ENCODE measurements at regions of chr19 and their contacts with region 1.

Region 1: GRCh38 chr19:58519355-58520256 is at the start of gene ZBTB45:
- DNase-seq: peak; percentile 93 to 94 (median 93)
- ATAC-seq: peak; percentile 90 to 95 (median 94)
- H3K4me3 ChIP-seq: peak within 1 kb of the TSS; percentile 70 to 97 (median 86)
- H3K27ac ChIP-seq: peak within 1 kb of the TSS; percentile 79 to 99 (median 94)
- H3K4me1 ChIP-seq: peaks cover 7 to 53% (median 32%) of the 10 kb centered on the region in 12 donors
- H3K27me3 ChIP-seq: no peaks in the 10 kb centered on the region
- CTCF ChIP-seq: peak; percentile 36 to 78 (median 56)
- POLR2A ChIP-seq: peak in 1 of 2 donors; percentile 42
- total RNA-seq, gene ZBTB45: 9.0 to 13.4 (median 10.5) TPM

Region 2: GRCh38 chr19:58182989-58183816 is 336.4 kb before region 1 on chr19 and contains the start of gene ZNF274:
- intact Hi-C with region 1: loop called in 1 of 10 experiments (anchors 2 kb)
- DNase-seq: peak; percentile 95 to 97 (median 96)
- ATAC-seq: peak; percentile 94 to 96 (median 96)
- H3K4me3 ChIP-seq: peak within 1 kb of the TSS; percentile 73 to 100 (median 94)
- H3K27ac ChIP-seq: peak within 1 kb of the TSS; percentile 90 to 100 (median 99)
- H3K4me1 ChIP-seq: peaks cover 0 to 18% (median 5%) of the 10 kb centered on the region in 12 donors
- H3K27me3 ChIP-seq: no peaks in the 10 kb centered on the region
- CTCF ChIP-seq: no peak
- POLR2A ChIP-seq: peak; percentile 48 to 92
- total RNA-seq, gene ZNF274: 16.2 to 29.0 (median 21.8) TPM

Region 3: GRCh38 chr19:58278157-58279041 is 241.2 kb before region 1 on chr19 and contains the start of gene ZNF8:
- intact Hi-C with region 1: no loop called
- DNase-seq: peak; percentile 98
- ATAC-seq: peak; percentile 95 to 96 (median 95)
- H3K4me3 ChIP-seq: peak within 1 kb of the TSS; percentile 75 to 97 (median 83)
- H3K27ac ChIP-seq: peak within 1 kb of the TSS; percentile 91 to 98 (median 94)
- H3K4me1 ChIP-seq: peaks cover 0 to 28% (median 16%) of the 10 kb centered on the region in 12 donors
- H3K27me3 ChIP-seq: no peaks in the 10 kb centered on the region
- CTCF ChIP-seq: peak in 5 of 12 donors; percentile 14 to 40 (median 27)
- POLR2A ChIP-seq: peak in 1 of 2 donors; percentile 72
- total RNA-seq, gene ZNF8: 4.0 to 7.8 (median 5.5) TPM

Region 4: DNA sequence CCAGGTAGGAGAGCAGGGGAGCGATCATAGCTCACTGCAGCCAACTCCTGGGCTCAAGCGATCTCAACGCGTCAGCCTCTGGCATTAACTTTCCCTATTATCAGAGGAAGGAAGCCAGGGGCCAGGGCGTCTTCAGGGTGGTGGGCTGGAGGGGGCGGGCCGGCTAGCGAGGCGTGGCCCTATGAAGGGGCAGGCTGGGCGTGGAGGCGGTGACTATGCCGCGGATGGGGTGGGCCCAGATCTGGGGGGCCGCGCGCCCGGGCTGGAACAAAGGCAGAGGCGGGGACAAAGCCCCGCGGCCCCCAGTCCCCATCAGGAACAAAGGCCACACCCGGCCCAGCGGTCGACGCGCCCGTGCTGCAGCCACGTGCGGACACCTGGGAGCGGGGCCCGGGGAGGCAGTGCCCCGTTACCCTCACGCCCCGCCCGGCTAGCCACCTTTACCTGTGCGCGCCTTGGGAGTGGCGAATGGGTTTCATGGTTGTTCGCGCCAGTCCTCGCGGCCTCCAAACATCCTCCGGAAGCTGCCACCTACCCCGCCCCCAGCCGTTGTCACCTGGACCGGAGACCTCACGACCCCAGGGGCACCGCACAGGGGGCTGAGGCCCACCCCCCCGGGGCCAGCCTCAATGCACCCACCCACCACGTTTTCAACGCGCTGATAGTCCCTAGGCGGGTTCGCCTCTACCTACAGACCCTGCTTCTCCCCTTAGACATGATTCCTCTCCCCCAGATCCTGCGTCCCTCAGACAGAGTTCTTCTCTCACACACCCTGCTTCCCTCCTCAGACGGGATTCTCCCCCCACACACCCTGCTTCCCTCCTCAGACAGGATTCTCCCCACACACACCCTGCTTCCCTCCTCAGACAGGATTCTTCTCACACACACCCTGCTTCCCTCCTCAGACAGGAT is 18.9 kb after region 1 on chr19:
- intact Hi-C with region 1: loop called in 2 of 10 experiments (anchors 2 kb)
- DNase-seq: peak in 1 of 5 donors; percentile 63
- ATAC-seq: peak in 3 of 4 donors; percentile 71 to 97 (median 88)
- H3K4me3 ChIP-seq: peak overlapping the region in 11 of 12 donors; percentile 13 to 54 (median 35)
- H3K27ac ChIP-seq: peak overlapping the region in 7 of 12 donors; percentile 18 to 54 (median 34)
- H3K4me1 ChIP-seq: peaks cover 0 to 17% (median 11%) of the 10 kb centered on the region in 12 donors
- H3K27me3 ChIP-seq: peaks cover 0 to 17% (median 11%) of the 10 kb centered on the region in 9 donors
- CTCF ChIP-seq: no peak
- POLR2A ChIP-seq: no peak

Region 5: DNA sequence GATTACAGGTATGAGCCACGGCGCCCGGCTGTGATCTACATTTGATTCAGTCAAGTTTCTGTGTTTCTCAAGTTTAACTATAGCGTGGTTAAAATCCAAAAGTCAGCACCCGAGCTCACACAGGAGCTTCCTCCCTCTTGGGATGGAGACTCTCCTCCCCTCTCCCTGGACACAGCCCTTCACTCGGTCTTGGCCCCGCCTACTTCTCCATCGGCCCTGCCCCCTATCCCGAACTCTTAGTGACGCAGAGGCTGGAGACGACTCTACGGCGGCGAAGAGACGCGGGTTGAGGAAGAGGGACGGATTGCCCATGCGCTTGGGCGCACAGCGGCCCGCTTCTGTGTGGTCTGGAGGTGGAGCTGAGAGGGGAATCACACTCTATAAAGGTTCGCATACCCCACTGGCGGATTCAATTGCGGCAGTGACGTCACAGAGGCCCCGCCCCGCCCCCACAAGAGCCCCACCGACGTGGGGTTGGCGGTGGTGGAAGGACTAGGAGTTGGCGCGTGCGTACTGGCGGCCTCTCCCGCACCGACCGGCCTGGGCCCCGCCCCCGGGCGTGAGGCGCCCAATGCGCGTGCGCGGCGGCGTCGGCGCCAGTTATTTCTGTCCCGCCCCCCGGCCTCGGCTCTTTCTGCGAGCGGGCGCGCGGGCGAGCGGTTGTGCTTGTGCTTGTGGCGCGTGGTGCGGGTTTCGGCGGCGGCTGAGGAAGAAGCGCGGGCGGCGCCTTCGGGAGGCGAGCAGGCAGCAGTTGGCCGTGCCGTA is 24.4 kb after region 1 on chr19 and contains the start of gene TRIM28:
- intact Hi-C with region 1: loop called in 4 of 10 experiments (anchors 1 to 2 kb)
- DNase-seq: peak; percentile 98 to 100 (median 98)
- ATAC-seq: peak; percentile 97 to 98 (median 97)
- H3K4me3 ChIP-seq: peak within 1 kb of the TSS; percentile 78 to 100 (median 92)
- H3K27ac ChIP-seq: peak within 1 kb of the TSS; percentile 87 to 98 (median 96)
- H3K4me1 ChIP-seq: peaks cover 12 to 36% (median 25%) of the 10 kb centered on the region in 12 donors
- H3K27me3 ChIP-seq: no peaks in the 10 kb centered on the region
- CTCF ChIP-seq: no peak
- POLR2A ChIP-seq: peak; percentile 55 to 96
- total RNA-seq, gene TRIM28: 122 to 265 (median 163) TPM

Region 6: DNA sequence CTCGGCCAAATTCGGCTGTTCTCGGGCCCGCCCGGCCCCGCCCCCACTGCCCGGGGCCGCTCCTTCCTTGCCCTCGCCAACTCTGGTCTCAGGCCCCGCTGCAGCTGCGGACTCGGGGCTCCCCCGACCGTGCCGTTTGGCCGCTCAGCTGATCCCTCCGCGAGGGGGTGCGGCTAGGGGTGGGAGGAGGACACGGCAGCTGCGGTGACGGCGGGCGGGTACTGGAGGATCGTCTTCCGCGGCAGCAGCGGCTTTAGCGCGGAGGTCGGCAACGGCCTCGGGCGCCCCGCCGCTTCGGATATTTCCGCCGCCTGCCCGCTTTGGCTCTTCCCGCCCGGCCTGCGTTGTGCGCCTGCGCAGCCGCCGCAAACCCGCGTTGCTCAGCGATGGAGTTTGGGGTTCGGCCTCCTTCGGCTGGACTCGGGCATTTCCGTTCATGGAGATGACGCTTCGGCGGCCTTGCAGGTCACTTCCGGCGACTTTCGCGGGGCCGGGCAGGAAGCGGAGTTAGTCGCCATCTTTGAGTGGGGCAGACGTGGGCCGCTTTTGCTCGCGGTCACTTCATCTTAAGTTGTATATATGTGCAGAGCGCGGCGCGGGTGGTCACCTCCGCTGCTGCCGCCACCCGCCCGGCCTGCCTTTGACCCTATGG is 39.1 kb after region 1 on chr19:
- intact Hi-C with region 1: loop called in 2 of 10 experiments (anchors 1 kb)
- DNase-seq: peak; percentile 99 to 100 (median 99)
- ATAC-seq: peak; percentile 71 to 84 (median 78)
- H3K4me3 ChIP-seq: peak overlapping the region; percentile 28 to 96 (median 77)
- H3K27ac ChIP-seq: peak overlapping the region; percentile 90 to 100 (median 100)
- H3K4me1 ChIP-seq: peaks cover 15 to 73% (median 63%) of the 10 kb centered on the region in 12 donors
- H3K27me3 ChIP-seq: peaks cover 0 to 19% (median 0%) of the 10 kb centered on the region in 9 donors
- CTCF ChIP-seq: peak in 1 of 12 donors; percentile 15
- POLR2A ChIP-seq: peak in 1 of 2 donors; percentile 63

Region 7: DNA sequence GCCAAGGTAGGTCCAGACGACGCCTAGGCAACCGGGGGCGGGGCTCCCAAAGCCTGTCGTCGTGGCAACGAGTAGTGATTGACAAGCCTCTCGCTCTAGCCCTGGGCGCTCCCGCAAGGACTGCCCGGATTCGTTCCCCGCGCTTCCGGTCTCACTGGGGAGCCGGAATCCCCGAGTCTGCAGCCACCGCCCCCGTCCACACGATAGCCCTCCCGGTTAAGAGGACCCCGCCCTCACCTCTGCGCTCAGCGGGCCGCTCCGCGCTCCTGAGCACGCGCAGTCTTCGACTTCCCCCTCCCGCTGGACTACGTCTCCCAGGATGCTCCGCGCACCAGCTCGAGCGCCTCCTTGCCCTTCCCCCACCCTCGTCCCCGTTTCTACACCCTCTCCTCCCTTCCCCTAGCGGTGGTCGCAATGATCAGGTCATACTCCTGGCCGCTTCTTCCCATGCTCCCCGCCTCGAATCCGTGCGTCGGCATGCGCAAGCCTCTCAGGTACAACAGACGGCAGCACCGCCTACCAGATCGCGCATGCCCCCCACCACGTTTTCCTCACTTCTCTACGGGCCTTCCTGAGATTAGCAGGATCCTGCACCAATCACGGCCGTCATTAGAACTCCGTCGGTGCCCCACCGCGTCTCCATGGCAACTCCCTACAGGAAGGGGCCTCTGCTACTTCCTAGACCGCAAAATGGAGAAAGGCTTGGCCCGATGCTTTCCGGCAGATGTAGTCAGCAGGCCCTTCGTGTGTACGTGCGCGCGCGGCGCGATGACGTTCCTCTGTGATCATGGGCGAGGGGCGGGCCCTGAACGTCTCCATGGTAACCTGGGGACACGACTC is 53.4 kb after region 1 on chr19 and contains the start of gene MZF1:
- intact Hi-C with region 1: loop called in 1 of 10 experiments (anchors 2 kb)
- DNase-seq: peak; percentile 99 to 100 (median 100)
- ATAC-seq: peak; percentile 77 to 87 (median 84)
- H3K4me3 ChIP-seq: peak within 1 kb of the TSS; percentile 36 to 89 (median 77)
- H3K27ac ChIP-seq: peak within 1 kb of the TSS; percentile 88 to 99 (median 96)
- H3K4me1 ChIP-seq: peaks cover 3 to 38% (median 17%) of the 10 kb centered on the region in 12 donors
- H3K27me3 ChIP-seq: no peaks in the 10 kb centered on the region
- CTCF ChIP-seq: peak in 3 of 12 donors; percentile 7 to 30 (median 12)
- POLR2A ChIP-seq: peak in 1 of 2 donors; percentile 31
- total RNA-seq, gene MZF1: 7.5 to 12.0 (median 9.1) TPM

Region 8: DNA sequence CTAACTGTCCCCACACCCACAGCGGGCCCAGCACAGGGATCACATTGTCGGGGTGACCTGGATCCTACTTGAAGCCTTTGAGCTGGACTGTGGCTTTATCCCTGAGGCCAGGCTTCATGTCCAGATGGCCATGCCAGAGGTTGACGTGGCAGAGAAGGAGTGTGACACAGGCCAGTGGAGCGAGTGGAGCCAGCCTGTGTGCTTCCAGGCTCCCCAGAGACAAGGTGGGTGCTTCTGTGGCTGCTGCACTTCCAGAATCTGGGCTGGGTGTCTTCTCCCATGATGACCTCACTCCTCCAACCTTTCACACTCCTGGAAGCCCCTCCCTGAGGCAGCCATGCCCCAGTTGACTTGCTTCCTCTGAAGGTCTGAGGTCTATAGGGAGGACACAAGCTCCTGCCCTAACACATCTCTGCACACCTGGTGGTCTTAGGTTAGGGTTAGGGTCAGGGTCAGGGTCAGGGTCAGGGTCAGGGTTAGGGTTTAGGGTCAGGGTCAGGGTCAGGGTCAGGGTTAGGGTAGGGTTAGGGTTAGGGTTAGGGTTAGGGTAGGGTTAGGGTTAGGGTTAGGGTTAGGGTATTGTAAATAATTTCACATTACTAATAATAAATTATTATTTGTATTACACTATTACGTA is 66.6 kb after region 1 on chr19:
- intact Hi-C with region 1: no loop called
- DNase-seq: peak in 1 of 5 donors; percentile 10
- ATAC-seq: peak in 1 of 4 donors; percentile 36
- H3K4me3 ChIP-seq: no peak overlapping the region
- H3K27ac ChIP-seq: no peak overlapping the region
- H3K4me1 ChIP-seq: peaks cover 0 to 3% (median 0%) of the 10 kb centered on the region in 12 donors
- H3K27me3 ChIP-seq: no peaks in the 10 kb centered on the region
- CTCF ChIP-seq: no peak
- POLR2A ChIP-seq: no peak

Measured in heart left ventricle (tissue), 16 donors.